ENCODE measurements at regions of chr13 and their contacts with region 1.

Region 1: GRCh38 chr13:46553886-46554858 is 1.2 kb downstream of the LRCH1 start:
- DNase-seq: peak; percentile 82
- H3K4me3 Mint-ChIP-seq: peak overlapping the region; percentile 90
- H3K27ac Mint-ChIP-seq: peak overlapping the region; percentile 87
- H3K4me1 Mint-ChIP-seq: peaks cover 39% of the 10 kb centered on the region
- H3K27me3 Mint-ChIP-seq: no peaks in the 10 kb centered on the region

Region 2: DNA sequence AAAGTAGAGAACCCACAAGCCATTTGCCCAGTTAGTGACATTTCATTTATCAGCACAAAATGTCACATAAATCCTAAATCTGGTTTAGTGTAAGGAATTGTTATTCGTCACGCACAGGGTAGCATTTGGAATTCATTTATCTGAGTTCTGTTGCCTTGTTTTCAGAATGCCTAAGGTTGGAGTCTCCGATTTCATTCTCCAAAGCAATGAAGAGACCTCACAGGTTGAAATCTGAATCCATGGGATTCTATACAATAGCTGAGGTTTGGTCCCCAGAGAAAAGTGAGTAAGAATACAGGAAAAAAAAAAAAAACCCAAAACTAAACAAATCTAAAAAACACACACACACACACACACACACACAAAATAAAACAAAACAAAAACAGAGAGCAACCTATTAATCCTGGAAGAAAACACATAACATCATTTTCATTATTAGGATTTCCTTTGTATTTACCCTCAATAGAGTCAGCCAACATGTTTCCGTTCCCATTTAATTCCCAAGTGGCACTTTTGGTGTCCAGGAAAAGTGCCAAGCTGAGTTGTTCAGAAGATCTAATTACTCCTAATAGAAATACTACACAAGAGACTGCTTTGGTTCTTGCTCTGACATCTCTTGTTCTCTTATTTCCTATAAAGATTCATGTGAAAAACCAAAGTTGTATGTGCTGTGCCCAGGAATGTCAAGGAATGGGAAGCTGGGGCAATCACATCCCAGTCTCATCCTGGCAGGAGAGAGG is 37.4 kb before region 1 on chr13:
- CTCF ChIA-PET with region 1: no interaction called
- POLR2A ChIA-PET with region 1: no interaction called
- intact Hi-C with region 1: no loop called
- DNase-seq: no peak
- H3K4me3 Mint-ChIP-seq: no peak overlapping the region
- H3K27ac Mint-ChIP-seq: no peak overlapping the region
- H3K4me1 Mint-ChIP-seq: no peaks in the 10 kb centered on the region
- H3K27me3 Mint-ChIP-seq: peaks cover 7% of the 10 kb centered on the region

Region 3: DNA sequence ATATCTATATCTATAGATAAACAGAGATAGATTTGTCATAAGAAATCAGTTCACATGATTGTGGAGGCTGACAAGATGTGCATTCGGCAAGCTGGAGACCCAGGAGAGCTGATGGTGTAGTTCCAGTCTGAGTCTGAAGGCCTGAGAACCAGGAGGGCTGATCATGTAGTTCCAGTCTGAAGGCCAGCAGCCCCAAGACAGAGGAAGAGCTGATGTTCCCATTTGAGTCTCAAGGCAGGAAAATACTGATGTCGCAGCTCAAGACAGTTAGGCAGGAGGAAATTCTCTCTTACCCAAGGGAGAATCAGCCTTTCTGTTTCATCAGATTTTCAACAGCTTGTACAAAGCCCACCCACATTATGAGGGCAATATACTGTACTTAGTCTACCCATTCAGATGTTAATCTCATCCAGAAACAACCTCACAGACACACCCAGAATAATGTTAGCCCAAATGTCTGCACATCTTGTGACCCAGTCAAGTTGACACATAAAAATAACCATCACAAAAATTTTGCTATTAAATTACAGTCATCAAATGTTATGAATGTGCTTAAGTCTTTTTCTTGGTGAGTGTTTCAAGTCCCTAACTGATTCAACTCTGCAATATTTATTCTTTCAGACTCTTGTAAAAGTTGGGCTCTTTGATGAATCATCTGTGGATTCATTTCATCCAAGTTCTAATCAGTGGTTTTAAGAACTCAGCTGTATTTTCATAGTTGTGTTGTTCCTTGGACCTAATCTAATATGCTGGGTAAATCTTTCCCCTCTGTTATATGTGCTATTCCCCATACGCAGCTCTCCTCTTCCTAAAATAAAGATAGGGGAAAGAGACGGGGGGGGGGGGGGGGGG is 23.9 kb before region 1 on chr13:
- CTCF ChIA-PET with region 1: interaction called, 21 read pairs
- POLR2A ChIA-PET with region 1: no interaction called
- intact Hi-C with region 1: no loop called
- DNase-seq: no peak
- H3K4me3 Mint-ChIP-seq: no peak overlapping the region
- H3K27ac Mint-ChIP-seq: no peak overlapping the region
- H3K4me1 Mint-ChIP-seq: peaks cover 16% of the 10 kb centered on the region
- H3K27me3 Mint-ChIP-seq: peaks cover 3% of the 10 kb centered on the region

Region 4: DNA sequence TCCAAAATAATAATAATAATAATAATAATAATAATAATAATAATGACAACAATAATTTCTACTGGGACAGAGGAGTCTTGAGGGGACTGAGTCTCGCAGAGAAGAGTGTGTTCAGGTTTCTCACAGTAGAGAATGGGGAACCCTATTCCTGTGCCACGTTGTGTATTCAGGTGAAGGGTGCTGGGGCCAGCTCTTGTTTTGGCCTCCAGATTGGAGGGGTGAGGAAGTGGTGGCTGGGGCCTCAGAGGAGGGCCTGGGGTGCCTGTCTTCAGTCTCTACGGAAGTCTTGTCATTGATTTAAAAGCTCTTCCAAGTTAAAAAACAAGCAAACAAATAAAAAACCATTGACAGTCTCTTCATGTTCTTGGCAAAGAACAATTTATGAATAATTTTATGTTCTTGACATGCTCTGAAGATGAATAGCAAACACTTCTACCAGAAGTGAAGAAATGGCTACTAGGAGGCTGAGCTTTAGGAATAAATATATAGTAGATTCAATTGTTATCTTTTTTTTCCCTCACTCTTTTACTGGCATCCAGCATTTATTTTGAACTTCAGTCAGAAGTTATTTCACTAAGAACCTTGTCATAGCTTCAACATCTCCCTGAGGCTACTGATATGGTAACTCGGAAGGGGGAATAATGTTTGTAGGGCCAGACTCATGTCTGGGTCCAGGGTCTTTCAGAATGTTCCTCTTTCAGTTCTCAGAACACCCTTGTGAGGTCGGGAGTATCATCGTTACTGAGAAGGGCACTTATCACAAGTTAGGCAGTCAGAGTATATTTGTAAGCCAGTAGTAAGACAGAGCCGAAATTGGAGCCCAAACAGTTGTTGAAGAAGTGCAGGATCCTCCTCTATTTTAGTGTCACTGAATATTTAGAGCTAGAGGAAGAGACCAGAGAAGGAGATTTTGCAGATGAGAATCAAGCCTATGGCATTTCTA is 11.9 kb after region 1 on chr13:
- CTCF ChIA-PET with region 1: interaction called, 15 read pairs
- POLR2A ChIA-PET with region 1: interaction called, 3 read pairs
- intact Hi-C with region 1: no loop called
- DNase-seq: no peak
- H3K4me3 Mint-ChIP-seq: no peak overlapping the region
- H3K27ac Mint-ChIP-seq: no peak overlapping the region
- H3K4me1 Mint-ChIP-seq: peaks cover 11% of the 10 kb centered on the region
- H3K27me3 Mint-ChIP-seq: no peaks in the 10 kb centered on the region

Region 5: DNA sequence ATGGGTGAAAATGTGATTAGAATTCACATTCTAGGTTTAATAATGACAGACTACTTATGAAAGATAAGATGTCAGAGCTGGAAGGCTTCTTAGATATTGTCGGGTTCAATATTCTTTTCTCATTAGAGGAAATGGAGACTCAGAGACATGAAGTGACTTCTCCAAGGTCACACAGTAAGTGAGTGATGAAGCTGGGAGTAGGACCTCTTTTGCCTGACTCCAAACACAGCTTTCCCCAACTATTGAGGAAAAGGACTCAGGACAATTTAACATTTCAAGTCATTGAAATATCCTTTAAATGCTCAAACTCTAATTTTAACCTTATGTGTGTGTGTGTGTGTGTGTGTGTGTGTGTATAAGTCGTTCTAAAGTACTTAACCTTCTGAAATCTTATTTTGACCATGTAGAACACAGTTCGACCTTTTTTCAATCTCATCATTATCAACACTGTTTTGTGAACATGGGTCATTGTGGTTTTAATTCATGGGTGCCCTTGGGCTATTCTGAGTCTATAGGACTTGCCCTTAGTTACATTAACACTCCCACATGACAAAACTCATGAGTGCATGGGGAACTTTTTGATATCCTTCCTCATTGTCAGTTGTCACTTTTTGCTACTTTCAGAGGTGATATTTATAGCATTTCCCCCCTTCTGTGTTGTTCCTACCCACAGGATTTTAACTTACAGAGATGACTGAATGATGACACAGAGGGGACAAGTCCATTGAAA is 51.8 kb after region 1 on chr13:
- CTCF ChIA-PET with region 1: interaction called, 5 read pairs
- POLR2A ChIA-PET with region 1: no interaction called
- intact Hi-C with region 1: loop called (anchors 2 kb)
- DNase-seq: no peak
- H3K4me3 Mint-ChIP-seq: no peak overlapping the region
- H3K27ac Mint-ChIP-seq: no peak overlapping the region
- H3K4me1 Mint-ChIP-seq: peaks cover 59% of the 10 kb centered on the region
- H3K27me3 Mint-ChIP-seq: no peaks in the 10 kb centered on the region

Region 6: DNA sequence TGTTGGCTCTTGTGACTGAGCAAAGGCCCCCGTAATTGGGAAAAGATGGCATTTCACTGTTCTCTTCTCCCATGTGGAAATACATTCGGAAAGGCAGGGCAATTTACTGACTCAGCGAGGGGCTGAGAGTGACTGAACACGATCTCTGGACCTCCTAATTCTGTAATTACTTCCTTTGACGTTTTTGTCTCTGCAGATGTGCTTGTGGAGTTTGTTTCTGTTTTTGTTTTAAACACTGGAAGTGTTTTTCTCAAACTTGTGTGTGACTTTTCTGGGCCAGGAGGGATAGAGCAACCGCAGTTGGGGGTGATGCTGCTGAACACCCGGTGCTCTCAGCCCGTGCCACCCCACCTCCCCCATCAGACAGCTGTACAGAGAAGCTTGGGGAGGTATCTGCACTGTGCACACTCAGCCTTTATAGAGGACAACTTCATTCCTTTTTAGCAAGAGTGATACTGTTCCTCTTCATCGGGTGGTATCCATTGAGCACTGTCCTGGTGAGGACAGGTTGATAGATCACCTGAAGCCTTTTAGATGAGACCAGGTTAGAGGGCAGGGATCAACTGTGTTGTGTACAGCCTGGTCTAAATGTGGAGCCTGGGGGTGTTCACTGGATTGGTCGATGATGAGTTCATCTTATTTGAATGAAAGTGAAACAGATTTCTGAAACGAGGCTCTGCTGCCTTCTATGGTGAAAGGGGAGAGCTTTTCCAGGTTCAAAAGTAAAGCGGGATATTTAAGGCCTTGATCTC is 125.4 kb after region 1 on chr13:
- CTCF ChIA-PET with region 1: interaction called, 14 read pairs
- POLR2A ChIA-PET with region 1: no interaction called
- intact Hi-C with region 1: loop called (anchors 1 kb)
- DNase-seq: peak; percentile 28
- H3K4me3 Mint-ChIP-seq: no peak overlapping the region
- H3K27ac Mint-ChIP-seq: no peak overlapping the region
- H3K4me1 Mint-ChIP-seq: peaks cover 18% of the 10 kb centered on the region
- H3K27me3 Mint-ChIP-seq: no peaks in the 10 kb centered on the region

Region 7: DNA sequence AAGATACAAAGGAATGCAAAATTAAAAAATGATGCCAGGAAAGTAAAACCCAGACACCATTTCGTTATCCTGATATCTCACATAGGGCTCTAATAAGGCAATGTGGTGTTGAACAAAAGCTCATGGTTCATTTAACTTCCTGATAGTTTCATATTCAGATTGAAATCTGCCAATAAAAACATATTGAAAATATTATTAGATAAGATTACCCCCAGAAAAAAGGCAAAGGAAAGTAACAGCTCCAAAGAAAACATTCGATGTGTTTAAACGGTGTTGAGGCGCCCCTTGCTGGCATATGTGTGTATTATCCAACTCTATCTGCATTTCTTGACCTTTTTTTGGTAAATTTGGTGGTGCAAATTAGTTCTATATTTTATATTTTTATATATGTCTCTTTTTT is 166.9 kb after region 1 on chr13:
- CTCF ChIA-PET with region 1: interaction called, 103 read pairs
- POLR2A ChIA-PET with region 1: interaction called, 3 read pairs
- intact Hi-C with region 1: loop called (anchors 1 kb)
- DNase-seq: peak; percentile 44
- H3K4me3 Mint-ChIP-seq: no peak overlapping the region
- H3K27ac Mint-ChIP-seq: no peak overlapping the region
- H3K4me1 Mint-ChIP-seq: no peaks in the 10 kb centered on the region
- H3K27me3 Mint-ChIP-seq: no peaks in the 10 kb centered on the region

Measured in activated CD4-positive, alpha-beta memory T cell treated with anti-CD3 and anti-CD28 coated beads for 36 hours (primary cell).